ENCODE measurements at regions of chr18 and their contacts with region 1.

Region 1: DNA sequence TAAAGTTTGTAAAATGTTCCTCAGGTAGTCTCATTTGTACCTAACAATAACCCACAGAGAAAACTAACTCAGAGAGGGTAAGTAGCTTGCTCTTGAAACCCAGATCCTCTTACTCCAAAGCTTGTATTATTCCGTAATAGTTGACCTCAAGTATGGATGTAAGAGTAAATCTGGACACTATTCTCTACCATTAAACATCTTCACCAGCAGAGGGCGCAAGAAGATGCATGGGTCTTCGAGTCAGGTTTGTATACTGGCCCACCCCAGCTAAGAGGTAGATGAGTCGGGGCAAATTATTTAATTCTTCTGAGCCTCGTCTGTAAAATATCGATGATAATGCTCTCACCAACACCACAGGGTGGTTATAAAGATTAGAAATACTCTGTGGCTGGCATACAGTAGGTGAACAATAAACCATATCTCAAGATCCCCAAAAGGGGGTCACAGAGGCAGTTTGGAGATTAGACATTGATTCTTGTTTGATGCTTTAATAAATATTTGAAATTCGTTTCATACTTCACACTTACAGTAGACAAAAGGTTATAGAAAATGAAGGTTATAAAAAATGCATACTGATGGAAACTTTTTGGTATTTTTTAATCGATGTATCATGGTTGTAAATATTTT is 3.5 kb upstream of the CABLES1 start:
- DNase-seq: no peak
- ATAC-seq: peak; percentile 35
- H3K4me3 Mint-ChIP-seq: no peak overlapping the region
- H3K27ac Mint-ChIP-seq: no peak overlapping the region
- H3K4me1 Mint-ChIP-seq: peaks cover 27% of the 10 kb centered on the region
- H3K27me3 Mint-ChIP-seq: peaks cover 9% of the 10 kb centered on the region
- CTCF ChIP-seq: peak; percentile 72

Region 2: DNA sequence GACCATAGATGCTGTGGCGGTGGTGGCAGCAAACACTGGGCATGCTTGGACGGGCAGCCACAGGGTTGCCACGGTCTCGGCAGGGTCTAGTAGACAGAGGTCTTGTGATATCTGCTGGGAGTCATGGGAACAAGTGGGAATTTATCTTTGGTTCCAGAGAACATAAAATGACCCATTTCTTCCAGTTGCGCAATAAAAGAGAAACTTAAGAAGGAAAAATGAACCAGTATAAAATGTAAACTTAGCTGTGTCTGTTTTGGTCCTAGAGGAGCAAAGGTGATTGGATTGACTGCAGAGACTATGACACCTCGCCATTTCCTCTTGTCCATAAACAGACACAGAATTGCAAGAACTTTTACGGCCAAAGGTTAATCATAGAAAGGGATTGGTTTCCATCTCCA is 331.3 kb before region 1 on chr18:
- CTCF ChIA-PET with region 1: no interaction called
- POLR2A ChIA-PET with region 1: no interaction called
- intact Hi-C with region 1: loop called (anchors 2 kb)
- DNase-seq: no peak
- ATAC-seq: no peak
- H3K4me3 Mint-ChIP-seq: no peak overlapping the region
- H3K27ac Mint-ChIP-seq: no peak overlapping the region
- H3K4me1 Mint-ChIP-seq: no peaks in the 10 kb centered on the region
- H3K27me3 Mint-ChIP-seq: peaks cover 7% of the 10 kb centered on the region
- CTCF ChIP-seq: no peak

Region 3: DNA sequence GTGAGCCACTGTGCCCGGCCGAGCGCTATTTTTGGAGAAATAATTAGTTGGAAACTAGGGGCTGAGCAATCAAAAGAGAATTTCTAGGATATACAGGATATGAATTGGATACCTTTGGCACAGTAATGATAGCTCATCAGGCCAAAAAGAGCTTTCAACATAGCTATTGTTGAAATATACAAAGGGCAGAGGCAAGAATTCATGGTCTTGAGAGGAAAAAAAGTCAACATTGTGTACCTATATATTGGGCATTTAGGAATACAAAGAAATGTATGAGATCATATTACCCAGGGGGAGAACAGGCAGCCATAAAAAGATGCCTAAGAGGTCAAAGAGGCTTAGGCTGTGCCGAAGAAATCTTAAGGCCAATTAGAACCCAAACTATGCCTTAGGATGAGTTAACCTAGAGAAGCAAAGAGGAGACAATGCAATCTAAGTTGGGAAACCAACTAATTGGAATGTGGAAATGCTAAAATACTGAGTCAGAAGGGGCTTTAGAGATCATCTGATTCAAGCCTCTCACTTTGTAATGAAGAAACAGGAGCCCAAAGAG is 99.7 kb before region 1 on chr18:
- CTCF ChIA-PET with region 1: interaction called, 4 read pairs
- POLR2A ChIA-PET with region 1: no interaction called
- intact Hi-C with region 1: loop called (anchors 2 kb)
- DNase-seq: no peak
- ATAC-seq: no peak
- H3K4me3 Mint-ChIP-seq: no peak overlapping the region
- H3K27ac Mint-ChIP-seq: no peak overlapping the region
- H3K4me1 Mint-ChIP-seq: no peaks in the 10 kb centered on the region
- H3K27me3 Mint-ChIP-seq: no peaks in the 10 kb centered on the region
- CTCF ChIP-seq: no peak

Region 4: DNA sequence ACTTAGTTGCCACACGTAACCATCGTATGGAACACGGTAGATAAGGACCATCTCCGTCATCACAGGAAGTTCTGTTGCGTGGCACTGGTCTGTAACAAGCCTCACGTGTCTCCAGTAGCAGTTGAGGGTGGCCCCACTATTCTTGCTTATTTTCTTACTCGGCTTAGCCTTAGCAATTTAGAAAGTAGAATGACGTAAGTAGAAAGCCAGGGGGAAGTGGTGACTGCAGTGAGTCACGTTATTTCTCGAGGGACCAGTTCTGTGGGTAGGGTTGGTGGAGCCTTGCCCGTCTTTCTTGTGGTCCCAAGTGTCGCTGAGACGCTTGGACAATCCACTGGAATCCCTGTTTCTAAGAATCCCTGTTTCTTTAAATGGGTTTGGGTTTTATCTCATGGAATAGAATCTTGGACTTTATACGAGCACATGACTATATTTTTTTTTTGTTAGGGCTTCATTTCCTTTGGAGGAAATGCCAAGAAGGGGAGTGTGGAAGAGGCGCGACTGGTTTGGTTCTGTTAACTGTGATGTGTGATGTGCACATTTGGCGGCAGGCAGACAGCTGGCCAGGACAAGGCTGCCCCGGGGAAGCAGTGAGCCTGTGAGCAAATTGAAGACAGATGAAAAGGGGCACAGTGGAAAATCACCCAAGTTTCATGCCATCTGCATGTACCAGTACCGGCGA is 99.7 kb after region 1 on chr18:
- CTCF ChIA-PET with region 1: interaction called, 38 read pairs
- POLR2A ChIA-PET with region 1: interaction called, 150 read pairs
- intact Hi-C with region 1: loop called (anchors 1 kb)
- DNase-seq: peak; percentile 58
- ATAC-seq: peak; percentile 75
- H3K4me3 Mint-ChIP-seq: peak overlapping the region; percentile 76
- H3K27ac Mint-ChIP-seq: peak overlapping the region; percentile 97
- H3K4me1 Mint-ChIP-seq: peaks cover 74% of the 10 kb centered on the region
- H3K27me3 Mint-ChIP-seq: no peaks in the 10 kb centered on the region
- CTCF ChIP-seq: no peak

Region 5: GRCh38 chr18:23259701-23260582 is 128.1 kb after region 1 on chr18:
- CTCF ChIA-PET with region 1: no interaction called
- POLR2A ChIA-PET with region 1: interaction called, 14 read pairs
- intact Hi-C with region 1: no loop called
- DNase-seq: no peak
- ATAC-seq: peak; percentile 67
- H3K4me3 Mint-ChIP-seq: peak overlapping the region; percentile 76
- H3K27ac Mint-ChIP-seq: peak overlapping the region; percentile 79
- H3K4me1 Mint-ChIP-seq: peaks cover 46% of the 10 kb centered on the region
- H3K27me3 Mint-ChIP-seq: no peaks in the 10 kb centered on the region
- CTCF ChIP-seq: no peak

Region 6: GRCh38 chr18:23412351-23412964 is 280.7 kb after region 1 on chr18:
- CTCF ChIA-PET with region 1: interaction called, 55 read pairs
- POLR2A ChIA-PET with region 1: interaction called, 5 read pairs
- intact Hi-C with region 1: loop called (anchors 1 kb)
- DNase-seq: no peak
- ATAC-seq: no peak
- H3K4me3 Mint-ChIP-seq: no peak overlapping the region
- H3K27ac Mint-ChIP-seq: no peak overlapping the region
- H3K4me1 Mint-ChIP-seq: peaks cover 7% of the 10 kb centered on the region
- H3K27me3 Mint-ChIP-seq: no peaks in the 10 kb centered on the region
- CTCF ChIP-seq: no peak